Sigmoid colon (tissue), 7 donors: ENCODE measurements at regions of chr4 and their contacts with region 1.

Region 1: GRCh38 chr4:2364654-2365053 is 53.8 kb downstream of the ZFYVE28 start:
- DNase-seq: peak; percentile 73
- H3K4me3 ChIP-seq: peak overlapping the region; percentile 53 to 61 (median 58)
- H3K27ac ChIP-seq: peak overlapping the region in 3 of 4 donors; percentile 24 to 46 (median 46)
- H3K4me1 ChIP-seq: peaks cover 0 to 18% (median 15%) of the 10 kb centered on the region in 4 donors
- H3K27me3 ChIP-seq: no peaks in the 10 kb centered on the region
- CTCF ChIP-seq: no peak
- EP300 ChIP-seq: no peak
- POLR2A ChIP-seq: no peak

Region 2: DNA sequence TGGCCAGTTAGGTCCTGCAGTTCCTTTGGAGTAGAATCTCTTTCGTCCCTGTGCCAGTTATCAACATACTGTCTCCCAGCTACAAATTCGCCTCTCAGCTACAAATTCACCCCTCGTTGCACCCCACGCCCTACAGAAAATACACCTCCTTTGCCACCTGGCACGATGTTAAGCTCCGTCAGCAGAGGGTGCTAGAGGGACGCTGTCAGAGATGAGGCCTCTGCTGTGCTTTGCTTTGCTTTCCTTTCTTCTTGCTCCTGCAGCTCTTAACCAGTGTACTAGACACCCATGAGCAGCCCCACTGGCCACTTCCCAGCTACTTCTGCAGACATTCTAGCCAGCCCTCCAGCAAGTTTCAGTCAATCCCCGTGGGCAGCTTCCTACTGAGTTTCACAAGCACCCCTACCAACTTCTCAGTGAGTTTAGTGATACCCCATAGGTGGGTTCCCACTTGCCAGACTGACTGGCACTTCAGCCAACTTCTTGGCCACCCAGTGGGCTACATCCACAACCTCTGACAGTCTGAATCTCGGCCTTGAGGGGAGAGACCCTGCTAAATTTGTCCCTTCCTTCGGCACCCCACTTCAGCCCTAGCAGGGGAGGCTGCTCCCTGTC is 144.5 kb before region 1 on chr4:
- intact Hi-C with region 1: loop called (anchors 5 kb)
- DNase-seq: peak; percentile 77
- H3K4me3 ChIP-seq: no peak overlapping the region
- H3K27ac ChIP-seq: no peak overlapping the region
- H3K4me1 ChIP-seq: peaks cover 0 to 7% (median 0%) of the 10 kb centered on the region in 4 donors
- H3K27me3 ChIP-seq: no peaks in the 10 kb centered on the region
- CTCF ChIP-seq: peak; percentile 75 to 78 (median 76)
- EP300 ChIP-seq: no peak
- POLR2A ChIP-seq: no peak